MCF 10A (cell line): ENCODE measurements at regions of chr5 and their contacts with region 1.

Region 1: DNA sequence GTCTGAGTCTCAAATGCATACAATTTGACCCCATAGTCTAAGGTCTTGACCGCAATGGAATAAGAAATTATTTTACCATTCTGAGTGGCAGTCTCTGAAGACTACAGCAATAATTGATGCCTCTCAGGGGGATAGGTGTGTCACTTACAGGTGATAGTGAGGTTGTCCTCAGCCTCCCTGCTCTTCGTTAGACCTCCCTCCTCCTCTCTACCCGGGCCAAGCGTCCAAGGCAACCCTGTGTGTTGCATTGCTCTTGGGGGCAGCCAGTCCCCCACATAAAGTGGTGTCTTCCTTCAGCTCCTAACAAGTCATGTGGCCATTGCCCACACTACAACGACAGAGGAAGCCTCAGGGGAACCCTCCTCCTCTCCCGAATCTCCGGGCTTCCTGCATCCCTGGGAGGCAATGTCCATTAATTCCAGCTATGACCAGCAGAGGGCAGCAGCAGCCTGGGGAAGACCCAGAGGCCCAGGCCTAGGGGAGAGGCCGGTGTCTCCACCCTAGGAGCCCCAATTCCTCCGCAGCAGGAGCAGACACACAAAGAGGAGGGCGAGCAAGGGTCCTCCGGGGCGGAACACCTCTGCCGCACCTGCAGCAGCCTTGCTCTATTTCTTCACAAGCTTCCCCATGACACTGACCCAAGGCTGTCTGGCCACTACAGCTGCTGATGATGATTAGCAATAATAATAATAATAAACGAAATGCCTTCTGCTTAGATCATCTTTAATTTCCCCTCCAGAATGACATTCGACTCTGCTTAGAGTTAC is 134.8 kb downstream of the KCNIP1 start:
- DNase-seq: peak; percentile 84
- H3K4me3 Mint-ChIP-seq: no peak overlapping the region
- H3K27ac Mint-ChIP-seq: no peak overlapping the region
- H3K4me1 Mint-ChIP-seq: peaks cover 19% of the 10 kb centered on the region
- H3K27me3 Mint-ChIP-seq: no peaks in the 10 kb centered on the region
- CTCF ChIP-seq: peak; percentile 98

Region 2: GRCh38 chr5:170603578-170604565 is 34.8 kb before region 1 on chr5:
- CTCF ChIA-PET with region 1: interaction called, 233 read pairs
- POLR2A ChIA-PET with region 1: no interaction called
- intact Hi-C with region 1: loop called (anchors 1 kb)
- DNase-seq: peak; percentile 86
- H3K4me3 Mint-ChIP-seq: no peak overlapping the region
- H3K27ac Mint-ChIP-seq: no peak overlapping the region
- H3K4me1 Mint-ChIP-seq: peaks cover 5% of the 10 kb centered on the region
- H3K27me3 Mint-ChIP-seq: peaks cover 51% of the 10 kb centered on the region
- CTCF ChIP-seq: peak; percentile 97

Region 3: GRCh38 chr5:170623576-170624181 is 15.0 kb before region 1 on chr5:
- CTCF ChIA-PET with region 1: interaction called, 233 read pairs
- POLR2A ChIA-PET with region 1: no interaction called
- intact Hi-C with region 1: no loop called
- DNase-seq: peak; percentile 78
- H3K4me3 Mint-ChIP-seq: no peak overlapping the region
- H3K27ac Mint-ChIP-seq: no peak overlapping the region
- H3K4me1 Mint-ChIP-seq: no peaks in the 10 kb centered on the region
- H3K27me3 Mint-ChIP-seq: peaks cover 27% of the 10 kb centered on the region
- CTCF ChIP-seq: peak; percentile 97

Region 4: DNA sequence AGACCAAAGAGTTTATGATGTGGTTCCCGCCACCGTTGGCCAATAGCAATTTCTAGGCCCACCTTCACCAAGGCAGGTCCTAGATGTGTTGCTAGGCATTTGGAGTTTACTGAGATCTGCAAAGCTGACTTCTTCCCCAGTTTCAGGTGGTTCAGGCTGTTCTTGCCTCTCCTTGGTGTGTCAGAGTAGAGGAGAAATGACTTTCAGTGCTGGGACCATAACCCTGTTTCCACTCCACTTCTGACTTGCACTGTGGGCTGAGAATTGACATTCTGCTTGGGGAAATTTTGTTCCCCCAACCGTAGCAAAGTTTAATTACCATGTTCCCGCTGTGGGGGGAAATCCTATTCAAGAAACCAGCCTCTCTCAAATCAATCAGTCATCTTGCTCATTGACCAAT is 16.8 kb after region 1 on chr5:
- CTCF ChIA-PET with region 1: interaction called, 27 read pairs
- POLR2A ChIA-PET with region 1: interaction called, 3 read pairs
- intact Hi-C with region 1: no loop called
- DNase-seq: no peak
- H3K4me3 Mint-ChIP-seq: no peak overlapping the region
- H3K27ac Mint-ChIP-seq: no peak overlapping the region
- H3K4me1 Mint-ChIP-seq: no peaks in the 10 kb centered on the region
- H3K27me3 Mint-ChIP-seq: no peaks in the 10 kb centered on the region
- CTCF ChIP-seq: no peak

Region 5: GRCh38 chr5:171122372-171122771 is 483.7 kb after region 1 on chr5:
- CTCF ChIA-PET with region 1: no interaction called
- POLR2A ChIA-PET with region 1: no interaction called
- intact Hi-C with region 1: no loop called
- DNase-seq: peak; percentile 20
- H3K4me3 Mint-ChIP-seq: no peak overlapping the region
- H3K27ac Mint-ChIP-seq: no peak overlapping the region
- H3K4me1 Mint-ChIP-seq: peaks cover 6% of the 10 kb centered on the region
- H3K27me3 Mint-ChIP-seq: no peaks in the 10 kb centered on the region
- CTCF ChIP-seq: no peak

Region 6: GRCh38 chr5:171355302-171355724 is 716.7 kb after region 1 on chr5:
- CTCF ChIA-PET with region 1: no interaction called
- POLR2A ChIA-PET with region 1: no interaction called
- intact Hi-C with region 1: no loop called
- DNase-seq: no peak
- H3K4me3 Mint-ChIP-seq: no peak overlapping the region
- H3K27ac Mint-ChIP-seq: no peak overlapping the region
- H3K4me1 Mint-ChIP-seq: no peaks in the 10 kb centered on the region
- H3K27me3 Mint-ChIP-seq: no peaks in the 10 kb centered on the region
- CTCF ChIP-seq: no peak